Left colon (tissue), 2 donors: ENCODE measurements at regions of chr2 and their contacts with region 1.

Region 1: DNA sequence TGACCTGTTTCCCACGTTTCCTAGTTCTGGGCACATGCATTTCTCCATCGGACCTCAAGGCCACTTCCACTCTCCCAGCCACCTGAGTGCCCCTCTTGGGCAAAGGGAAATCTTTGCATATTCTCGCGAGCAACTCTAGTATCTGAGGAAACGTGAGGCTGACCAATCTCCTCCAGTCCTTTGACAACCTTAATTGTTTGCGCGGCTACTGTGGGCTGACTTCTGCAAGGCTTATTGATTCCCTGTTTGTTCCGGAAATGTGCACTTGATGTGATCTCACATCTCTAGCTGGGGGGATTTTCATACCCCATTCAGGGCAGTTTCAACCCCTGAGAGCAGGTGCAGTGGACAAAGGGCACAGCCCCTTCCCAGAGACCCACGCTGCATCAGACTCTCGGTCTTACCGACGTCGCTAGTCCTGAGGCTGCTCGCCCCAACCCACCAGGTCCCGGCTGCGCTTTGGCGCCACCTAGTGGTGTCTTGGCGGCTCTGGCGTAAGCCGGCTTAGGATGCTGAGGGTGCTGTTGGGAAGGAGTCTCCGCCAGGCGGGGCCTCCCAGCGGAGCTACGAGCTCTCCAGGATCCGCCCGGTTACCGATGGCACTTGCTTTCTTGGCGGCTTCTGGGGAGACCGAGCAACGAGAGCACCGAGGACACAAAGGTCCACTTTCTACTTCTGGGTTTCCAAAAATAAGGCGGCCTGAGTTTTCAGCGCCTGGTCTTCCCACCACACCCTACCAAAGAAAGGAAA is 24.8 kb upstream of the SPR start:
- DNase-seq: peak; percentile 79 to 91
- ATAC-seq: peak; percentile 98

Region 2: DNA sequence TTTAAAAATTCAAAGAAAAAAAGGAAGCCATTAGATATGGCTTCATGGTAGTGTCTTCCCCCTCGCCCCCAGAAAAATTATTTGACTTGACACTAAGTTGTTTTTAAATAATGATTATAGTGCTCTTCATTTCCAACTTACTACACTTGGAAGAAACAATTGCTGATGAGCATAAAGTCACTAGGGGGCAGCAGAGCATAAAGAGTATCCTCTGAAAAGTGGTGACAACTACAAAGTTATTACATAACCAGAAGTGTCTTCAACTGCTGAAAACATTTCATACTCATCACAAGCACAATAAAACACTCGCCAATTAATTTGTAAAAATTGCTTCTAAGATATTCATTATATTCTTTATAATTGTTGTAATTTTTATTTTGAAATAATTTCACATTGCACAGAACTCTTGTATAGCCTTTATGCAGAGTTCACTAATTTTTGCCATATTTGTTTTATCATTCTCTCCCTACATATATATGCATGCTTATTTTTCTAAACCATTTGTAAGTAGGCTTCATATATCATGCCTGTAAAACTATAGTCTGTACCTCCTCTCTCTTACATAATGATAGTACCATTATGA is 91.4 kb before region 1 on chr2:
- intact Hi-C with region 1: loop called (anchors 2 to 10 kb)
- DNase-seq: peak in 1 of 2 donors; percentile 55
- ATAC-seq: peak; percentile 75

Region 3: DNA sequence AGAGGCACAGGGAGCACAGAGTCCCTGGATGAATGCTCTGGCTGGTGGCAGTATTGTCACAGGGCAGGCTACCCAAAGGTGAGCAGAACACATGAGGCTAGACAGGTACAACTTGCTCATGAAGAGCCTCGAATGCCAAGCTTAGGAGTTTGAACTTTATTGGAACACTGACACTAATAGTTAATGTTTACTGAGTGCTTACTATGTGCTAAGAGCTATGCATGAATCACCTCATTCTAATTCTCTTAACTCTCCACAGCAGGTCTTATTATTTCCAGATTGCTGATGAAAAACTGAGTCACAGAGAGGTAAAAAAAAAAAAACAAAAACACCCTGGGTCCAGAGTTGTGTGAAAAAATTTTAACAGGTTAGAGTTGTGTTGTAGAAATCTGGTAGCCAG is 48.8 kb after region 1 on chr2:
- intact Hi-C with region 1: no loop called
- DNase-seq: no peak
- ATAC-seq: no peak